Activated T-helper 2 cell treated with anti-CD3 and anti-CD28 coated beads, Interferon-gamma antibody, Interleukin-2, Interleukin-4, amounts not matched to agents 10 μg/mL and 5 μg/mL and 100 μg/mL, durations not matched to agents 14 hours and 24 hours and 36 hours (primary cell): ENCODE measurements at regions of chr6 and their contacts with region 1.

Region 1: GRCh38 chr6:75208298-75209183 is 2.7 kb upstream of the COL12A1 start:
- DNase-seq: peak; percentile 70
- H3K4me3 Mint-ChIP-seq: peak overlapping the region; percentile 54
- H3K27ac Mint-ChIP-seq: no peak overlapping the region
- H3K4me1 Mint-ChIP-seq: peaks cover 45% of the 10 kb centered on the region
- H3K27me3 Mint-ChIP-seq: peaks cover 72% of the 10 kb centered on the region

Region 2: GRCh38 chr6:73739096-73739495 is 1469.4 kb before region 1 on chr6:
- intact Hi-C with region 1: loop called (anchors 1 kb)
- DNase-seq: no peak
- H3K4me3 Mint-ChIP-seq: no peak overlapping the region
- H3K27ac Mint-ChIP-seq: no peak overlapping the region
- H3K4me1 Mint-ChIP-seq: peaks cover 5% of the 10 kb centered on the region
- H3K27me3 Mint-ChIP-seq: no peaks in the 10 kb centered on the region

Region 3: GRCh38 chr6:73969971-73970970 is 1238.3 kb before region 1 on chr6:
- intact Hi-C with region 1: loop called (anchors 2 kb)
- DNase-seq: no peak
- H3K4me3 Mint-ChIP-seq: no peak overlapping the region
- H3K27ac Mint-ChIP-seq: no peak overlapping the region
- H3K4me1 Mint-ChIP-seq: no peaks in the 10 kb centered on the region
- H3K27me3 Mint-ChIP-seq: no peaks in the 10 kb centered on the region

Region 4: DNA sequence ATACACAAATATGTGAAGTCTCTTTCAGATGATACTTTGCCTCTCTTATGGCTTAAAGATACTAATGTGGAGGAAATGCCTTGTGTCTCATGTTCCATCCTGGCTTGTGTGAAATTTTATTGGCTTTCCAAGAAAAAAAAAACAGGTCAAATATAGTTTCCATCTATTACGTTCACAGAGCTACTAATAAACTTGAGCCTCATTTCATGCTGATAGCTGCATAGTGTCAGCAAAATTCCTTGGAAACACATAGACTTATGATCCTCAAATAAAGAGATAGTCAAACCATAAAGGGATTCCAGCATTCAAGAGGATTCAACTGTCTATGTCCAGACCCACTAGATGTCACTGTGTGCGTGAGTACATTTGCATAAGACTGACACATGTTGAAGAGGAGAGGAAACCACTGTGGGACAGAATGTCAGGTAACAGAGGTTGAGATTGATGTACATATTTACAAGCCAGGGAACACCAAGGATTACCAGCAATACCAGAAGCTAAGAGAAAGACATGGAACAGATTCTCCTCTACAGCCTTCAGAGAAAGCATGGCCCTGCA is 269.3 kb before region 1 on chr6:
- intact Hi-C with region 1: loop called (anchors 10 kb)
- DNase-seq: no peak
- H3K4me3 Mint-ChIP-seq: no peak overlapping the region
- H3K27ac Mint-ChIP-seq: no peak overlapping the region
- H3K4me1 Mint-ChIP-seq: no peaks in the 10 kb centered on the region
- H3K27me3 Mint-ChIP-seq: no peaks in the 10 kb centered on the region

Region 5: DNA sequence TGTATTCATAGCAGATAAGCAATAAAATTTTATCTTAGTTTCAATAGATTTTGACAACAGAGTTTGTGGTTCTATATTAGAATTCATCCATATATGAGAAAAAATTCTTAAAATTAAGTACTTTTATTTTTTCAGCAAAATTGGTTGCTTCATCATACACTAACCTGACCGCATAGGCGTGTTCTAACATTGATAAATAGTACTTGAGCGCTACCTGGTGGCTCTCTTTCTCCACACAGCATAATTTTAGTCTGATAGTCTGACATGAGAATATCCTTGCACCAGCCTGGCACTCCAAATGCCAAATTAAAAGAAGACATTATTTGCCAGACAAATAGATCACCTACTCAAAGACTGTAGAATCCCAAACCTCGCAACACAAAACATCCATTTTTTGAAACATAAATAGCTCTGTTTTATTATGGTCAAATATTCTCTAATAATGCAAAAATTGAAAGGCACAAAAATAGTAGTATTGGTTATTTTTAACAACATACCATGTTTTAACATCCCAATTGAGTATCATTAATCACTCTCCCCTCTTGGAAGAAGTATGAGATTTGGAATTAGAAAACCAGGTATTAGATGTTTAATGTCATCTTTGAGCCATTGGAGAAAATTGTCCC is 318.1 kb after region 1 on chr6:
- intact Hi-C with region 1: loop called (anchors 5 kb)
- DNase-seq: peak; percentile 28
- H3K4me3 Mint-ChIP-seq: no peak overlapping the region
- H3K27ac Mint-ChIP-seq: no peak overlapping the region
- H3K4me1 Mint-ChIP-seq: no peaks in the 10 kb centered on the region
- H3K27me3 Mint-ChIP-seq: peaks cover 37% of the 10 kb centered on the region